ENCODE measurements at regions of chr11 and their contacts with region 1.

Region 1: GRCh38 chr11:65274735-65275682 is 13.2 kb downstream of the POLA2 start:
- DNase-seq: no peak
- ATAC-seq: peak; percentile 40
- H3K4me3 Mint-ChIP-seq: no peak overlapping the region
- H3K27ac Mint-ChIP-seq: no peak overlapping the region
- H3K4me1 Mint-ChIP-seq: peaks cover 5% of the 10 kb centered on the region
- H3K27me3 Mint-ChIP-seq: no peaks in the 10 kb centered on the region
- CTCF ChIP-seq: no peak

Region 2: GRCh38 chr11:65204646-65205601 is 70.1 kb before region 1 on chr11:
- CTCF ChIA-PET with region 1: no interaction called
- POLR2A ChIA-PET with region 1: interaction called, 12 read pairs
- intact Hi-C with region 1: no loop called
- DNase-seq: peak; percentile 59
- ATAC-seq: peak; percentile 73
- H3K4me3 Mint-ChIP-seq: no peak overlapping the region
- H3K27ac Mint-ChIP-seq: no peak overlapping the region
- H3K4me1 Mint-ChIP-seq: peaks cover 3% of the 10 kb centered on the region
- H3K27me3 Mint-ChIP-seq: no peaks in the 10 kb centered on the region
- CTCF ChIP-seq: peak; percentile 66

Region 3: GRCh38 chr11:65261591-65262380 is 13.2 kb before region 1 on chr11 and contains the start of gene POLA2:
- CTCF ChIA-PET with region 1: interaction called, 17 read pairs
- POLR2A ChIA-PET with region 1: interaction called, 7 read pairs
- intact Hi-C with region 1: no loop called
- DNase-seq: peak; percentile 98
- ATAC-seq: peak; percentile 83
- H3K4me3 Mint-ChIP-seq: peak within 1 kb of the TSS; percentile 90
- H3K27ac Mint-ChIP-seq: peak within 1 kb of the TSS; percentile 91
- H3K4me1 Mint-ChIP-seq: peaks cover 27% of the 10 kb centered on the region
- H3K27me3 Mint-ChIP-seq: no peaks in the 10 kb centered on the region
- CTCF ChIP-seq: no peak
- total RNA-seq, gene POLA2: 37.1 and 43.4 TPM in 2 replicates

Region 4: GRCh38 chr11:65314501-65315203 is 39.6 kb after region 1 on chr11 and contains the start of gene CDC42EP2:
- CTCF ChIA-PET with region 1: interaction called, 45 read pairs
- POLR2A ChIA-PET with region 1: interaction called, 13 read pairs
- intact Hi-C with region 1: loop called (anchors 1 kb)
- DNase-seq: peak; percentile 79
- ATAC-seq: peak; percentile 95
- H3K4me3 Mint-ChIP-seq: peak within 1 kb of the TSS; percentile 83
- H3K27ac Mint-ChIP-seq: no peak within 1 kb of the TSS
- H3K4me1 Mint-ChIP-seq: peaks cover 5% of the 10 kb centered on the region
- H3K27me3 Mint-ChIP-seq: peaks cover 8% of the 10 kb centered on the region
- CTCF ChIP-seq: no peak
- total RNA-seq, gene CDC42EP2: 0.18 and 0.83 TPM in 2 replicates

Region 5: GRCh38 chr11:65506770-65507505 is 231.9 kb after region 1 on chr11:
- CTCF ChIA-PET with region 1: interaction called, 15 read pairs
- POLR2A ChIA-PET with region 1: interaction called, 6 read pairs
- intact Hi-C with region 1: loop called (anchors 1 kb)
- DNase-seq: no peak
- ATAC-seq: peak; percentile 49
- H3K4me3 Mint-ChIP-seq: no peak overlapping the region
- H3K27ac Mint-ChIP-seq: peak overlapping the region; percentile 84
- H3K4me1 Mint-ChIP-seq: peaks cover 62% of the 10 kb centered on the region
- H3K27me3 Mint-ChIP-seq: no peaks in the 10 kb centered on the region
- CTCF ChIP-seq: no peak